ENCODE measurements at regions of chr3 and their contacts with region 1.

Region 1: GRCh38 chr3:38479431-38480092 is 16.6 kb upstream of the EXOG start:
- DNase-seq: peak; percentile 66 to 79
- ATAC-seq: peak; percentile 87 to 96
- H3K4me3 ChIP-seq: no peak overlapping the region
- H3K27ac ChIP-seq: no peak overlapping the region
- H3K4me1 ChIP-seq: no peaks in the 10 kb centered on the region
- CTCF ChIP-seq: peak; percentile 87
- EP300 ChIP-seq: no peak
- POLR2A ChIP-seq: no peak
- RAD21 ChIP-seq: peak; percentile 90 to 91

Region 2: GRCh38 chr3:38453075-38453912 is 26.3 kb before region 1 on chr3 and contains the start of gene ACVR2B:
- CTCF ChIA-PET with region 1: interaction called, 10 read pairs
- POLR2A ChIA-PET with region 1: no interaction called
- DNase-seq: peak; percentile 81 to 83
- ATAC-seq: peak; percentile 65 to 69
- H3K4me3 ChIP-seq: peak within 1 kb of the TSS; percentile 93
- H3K27ac ChIP-seq: peak within 1 kb of the TSS; percentile 96 to 98
- H3K4me1 ChIP-seq: peaks cover 9% of the 10 kb centered on the region; the same call in 2 of the 3 replicates
- CTCF ChIP-seq: no peak
- EP300 ChIP-seq: no peak
- POLR2A ChIP-seq: no peak
- RAD21 ChIP-seq: no peak
- polyA plus RNA-seq, gene ACVR2B: 2.8 and 3.5 TPM in 2 replicates

Region 3: DNA sequence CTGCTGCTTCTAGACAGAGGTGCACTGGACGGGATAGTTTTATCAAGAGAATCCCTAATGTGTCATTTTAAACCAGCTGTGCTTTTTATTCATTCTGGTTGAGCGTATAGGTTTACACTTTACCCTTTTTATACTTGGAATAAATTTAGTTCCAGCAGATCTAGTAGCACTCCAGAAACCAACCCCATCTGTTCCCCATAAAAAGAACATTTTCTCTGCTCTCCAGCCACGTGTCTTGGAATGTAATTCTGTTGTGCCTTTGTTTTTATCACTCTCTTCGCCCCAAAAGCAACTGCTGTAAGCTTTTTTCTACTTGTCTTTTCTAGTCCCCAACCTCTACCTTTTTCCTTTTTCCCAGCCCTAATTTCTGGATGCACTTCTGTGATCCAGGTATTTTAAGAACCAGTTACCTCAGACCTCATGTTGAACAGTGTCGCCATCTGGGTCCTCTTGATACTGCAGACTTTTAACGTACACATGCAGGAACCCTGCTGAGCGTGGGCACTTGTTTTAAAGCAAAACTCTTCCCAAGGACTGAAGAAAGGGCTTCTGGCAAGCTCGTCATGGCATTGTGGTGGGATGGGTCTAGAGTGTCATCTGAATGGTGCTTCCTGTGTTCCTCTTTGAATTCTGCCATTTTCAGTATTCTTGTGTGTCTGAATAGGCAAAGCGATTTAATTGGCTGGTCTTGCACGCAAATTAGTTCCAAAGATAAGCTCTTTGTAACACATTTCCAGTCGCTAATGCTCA is 10.9 kb after region 1 on chr3:
- CTCF ChIA-PET with region 1: interaction called, 21 read pairs
- POLR2A ChIA-PET with region 1: no interaction called
- DNase-seq: no peak
- ATAC-seq: no peak
- H3K4me3 ChIP-seq: no peak overlapping the region
- H3K27ac ChIP-seq: no peak overlapping the region
- H3K4me1 ChIP-seq: no peaks in the 10 kb centered on the region
- CTCF ChIP-seq: no peak
- EP300 ChIP-seq: no peak
- POLR2A ChIP-seq: no peak
- RAD21 ChIP-seq: no peak

Region 4: GRCh38 chr3:38496131-38496910 is 16.8 kb after region 1 on chr3 and contains the start of gene EXOG:
- CTCF ChIA-PET with region 1: interaction called, 21 read pairs
- POLR2A ChIA-PET with region 1: no interaction called
- DNase-seq: peak; percentile 93 to 98
- ATAC-seq: peak; percentile 96 to 99
- H3K4me3 ChIP-seq: peak within 1 kb of the TSS; percentile 64
- H3K27ac ChIP-seq: peak within 1 kb of the TSS; percentile 79 to 87
- H3K4me1 ChIP-seq: peaks cover 6% of the 10 kb centered on the region; the same call in 1 of the 3 replicates
- CTCF ChIP-seq: peak; percentile 79
- EP300 ChIP-seq: no peak
- POLR2A ChIP-seq: peak; percentile 54
- RAD21 ChIP-seq: peak; percentile 55 to 70
- polyA plus RNA-seq, gene EXOG: 16.6 and 17.1 TPM in 2 replicates

Region 5: GRCh38 chr3:38528457-38528856 is 48.9 kb after region 1 on chr3:
- CTCF ChIA-PET with region 1: no interaction called
- POLR2A ChIA-PET with region 1: no interaction called
- DNase-seq: peak in 1 of 2 experiments; percentile 44
- ATAC-seq: peak in 1 of 2 experiments; percentile 72; a peak in 3 of 6 replicates
- H3K4me3 ChIP-seq: no peak overlapping the region
- H3K27ac ChIP-seq: no peak overlapping the region
- H3K4me1 ChIP-seq: no peaks in the 10 kb centered on the region
- CTCF ChIP-seq: 0 out of 3 replicates have a peak, but pooled peaks have one; percentile 7
- EP300 ChIP-seq: no peak
- POLR2A ChIP-seq: no peak
- RAD21 ChIP-seq: peak in 1 of 2 experiments; percentile 15; a peak in 1 of 5 replicates

Region 6: GRCh38 chr3:38662544-38662943 is 183.0 kb after region 1 on chr3:
- CTCF ChIA-PET with region 1: no interaction called
- POLR2A ChIA-PET with region 1: no interaction called
- DNase-seq: peak in 1 of 2 experiments; percentile 64
- ATAC-seq: peak in 1 of 2 experiments; percentile 72; a peak in 3 of 6 replicates
- H3K4me3 ChIP-seq: no peak overlapping the region
- H3K27ac ChIP-seq: no peak overlapping the region
- H3K4me1 ChIP-seq: no peaks in the 10 kb centered on the region
- CTCF ChIP-seq: peak; percentile 16; the same call in 1 of the 3 replicates
- EP300 ChIP-seq: no peak
- POLR2A ChIP-seq: no peak
- RAD21 ChIP-seq: peak; percentile 41 to 71; a peak in 4 of 5 replicates